PC-3 (cell line): ENCODE measurements at regions of chr6 and their contacts with region 1.

Region 1: DNA sequence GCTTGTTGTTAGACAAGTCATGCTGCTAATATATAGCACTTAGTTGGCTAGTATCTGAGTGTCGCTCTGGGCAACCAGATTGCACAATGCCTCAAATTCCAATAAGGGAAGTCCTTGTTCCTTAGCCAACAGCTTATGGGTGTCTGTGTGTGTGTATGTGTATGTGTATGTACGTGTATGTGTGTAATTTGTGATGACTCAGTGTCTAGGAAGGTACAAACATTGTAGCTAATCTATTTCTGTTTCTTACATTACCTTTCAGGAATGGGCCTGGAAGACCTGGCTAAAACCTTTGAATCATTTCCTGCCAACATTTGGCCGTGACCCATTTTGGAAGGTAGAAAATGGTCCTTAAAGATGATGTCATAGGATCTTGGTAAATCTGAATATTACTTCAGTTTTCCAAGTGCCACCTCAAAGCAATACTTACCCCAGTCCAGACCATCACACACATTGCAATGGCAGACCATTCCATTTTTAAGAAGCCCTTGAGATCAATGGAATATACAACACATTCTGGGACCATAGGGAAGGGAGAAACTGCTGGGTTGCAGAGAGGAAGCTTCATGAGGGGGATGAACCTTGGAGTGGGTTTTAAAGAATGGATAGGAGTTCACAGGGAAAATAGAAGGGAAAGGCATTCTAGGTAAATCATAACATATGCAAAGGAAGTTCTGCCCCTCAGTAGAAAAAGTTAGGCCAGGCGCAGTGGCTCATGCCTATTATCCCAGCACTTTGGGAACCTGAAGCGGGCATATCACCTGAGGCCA is 25.1 kb downstream of the NEDD9 start:
- DNase-seq: peak; percentile 98
- ATAC-seq: peak; percentile 85
- H3K4me3 ChIP-seq: peak overlapping the region; percentile 56; the same call in 1 of the 2 replicates
- H3K27ac ChIP-seq: peak overlapping the region; percentile 97
- H3K4me1 ChIP-seq: peaks cover 46% of the 10 kb centered on the region
- H3K27me3 ChIP-seq: no peaks in the 10 kb centered on the region
- CTCF ChIP-seq: no peak

Region 2: DNA sequence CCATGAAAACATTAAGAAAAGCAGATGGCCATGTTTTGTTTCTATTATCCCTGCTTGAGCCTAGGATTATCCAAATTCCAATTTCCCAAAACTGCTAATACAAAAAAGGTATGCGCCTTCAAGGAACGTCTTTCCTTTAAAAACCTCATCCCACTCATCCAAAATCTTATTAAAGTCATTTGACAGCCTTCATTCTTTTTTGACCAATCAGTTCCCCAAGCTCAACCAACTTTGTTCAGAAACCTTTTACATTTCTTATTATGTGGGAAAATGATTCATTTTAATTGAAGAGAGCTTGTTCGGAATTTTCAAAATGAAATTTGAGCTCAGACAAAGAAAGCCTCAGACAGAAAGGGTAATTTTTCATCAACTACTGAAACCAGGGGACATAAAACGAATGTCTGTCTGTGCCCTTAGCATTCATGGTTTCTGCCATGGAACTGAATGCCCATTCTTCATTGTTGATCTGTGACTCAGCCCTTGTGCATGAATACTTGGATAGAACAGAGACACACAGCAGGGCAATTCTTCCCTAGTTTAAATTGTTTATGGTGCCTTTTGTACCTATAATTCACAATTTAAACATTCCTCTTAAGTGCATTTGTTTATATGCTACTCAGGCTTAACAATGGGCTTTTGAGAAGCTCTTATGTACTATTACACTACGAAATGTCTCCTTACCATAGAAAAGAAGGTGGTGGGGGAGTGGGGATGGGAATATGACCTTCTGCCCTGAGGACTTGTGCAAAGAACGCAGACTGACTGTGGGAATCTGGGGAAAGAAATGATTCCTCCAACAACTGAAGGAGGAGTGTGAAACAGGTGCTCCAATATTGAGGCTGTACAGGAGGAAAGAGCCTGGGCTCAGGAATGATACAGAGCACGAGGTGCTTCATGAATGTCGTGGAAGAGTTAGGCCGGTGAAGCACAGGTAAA is 46.1 kb before region 1 on chr6:
- CTCF ChIA-PET with region 1: no interaction called
- POLR2A ChIA-PET with region 1: no interaction called
- intact Hi-C with region 1: loop called (anchors 2 kb)
- DNase-seq: peak; percentile 75
- ATAC-seq: peak; percentile 86
- H3K4me3 ChIP-seq: no peak overlapping the region
- H3K27ac ChIP-seq: peak overlapping the region; percentile 79
- H3K4me1 ChIP-seq: peaks cover 28% of the 10 kb centered on the region
- H3K27me3 ChIP-seq: no peaks in the 10 kb centered on the region
- CTCF ChIP-seq: no peak

Region 3: GRCh38 chr6:11218538-11219399 is 11.4 kb after region 1 on chr6:
- CTCF ChIA-PET with region 1: no interaction called
- POLR2A ChIA-PET with region 1: interaction called, 6 read pairs
- intact Hi-C with region 1: loop called (anchors 1 kb)
- DNase-seq: peak; percentile 82
- ATAC-seq: peak; percentile 90
- H3K4me3 ChIP-seq: 0 out of 2 replicates have a peak overlapping the region, but pooled peaks have one; percentile 18
- H3K27ac ChIP-seq: peak overlapping the region; percentile 94
- H3K4me1 ChIP-seq: peaks cover 35% of the 10 kb centered on the region
- H3K27me3 ChIP-seq: no peaks in the 10 kb centered on the region
- CTCF ChIP-seq: no peak

Region 4: DNA sequence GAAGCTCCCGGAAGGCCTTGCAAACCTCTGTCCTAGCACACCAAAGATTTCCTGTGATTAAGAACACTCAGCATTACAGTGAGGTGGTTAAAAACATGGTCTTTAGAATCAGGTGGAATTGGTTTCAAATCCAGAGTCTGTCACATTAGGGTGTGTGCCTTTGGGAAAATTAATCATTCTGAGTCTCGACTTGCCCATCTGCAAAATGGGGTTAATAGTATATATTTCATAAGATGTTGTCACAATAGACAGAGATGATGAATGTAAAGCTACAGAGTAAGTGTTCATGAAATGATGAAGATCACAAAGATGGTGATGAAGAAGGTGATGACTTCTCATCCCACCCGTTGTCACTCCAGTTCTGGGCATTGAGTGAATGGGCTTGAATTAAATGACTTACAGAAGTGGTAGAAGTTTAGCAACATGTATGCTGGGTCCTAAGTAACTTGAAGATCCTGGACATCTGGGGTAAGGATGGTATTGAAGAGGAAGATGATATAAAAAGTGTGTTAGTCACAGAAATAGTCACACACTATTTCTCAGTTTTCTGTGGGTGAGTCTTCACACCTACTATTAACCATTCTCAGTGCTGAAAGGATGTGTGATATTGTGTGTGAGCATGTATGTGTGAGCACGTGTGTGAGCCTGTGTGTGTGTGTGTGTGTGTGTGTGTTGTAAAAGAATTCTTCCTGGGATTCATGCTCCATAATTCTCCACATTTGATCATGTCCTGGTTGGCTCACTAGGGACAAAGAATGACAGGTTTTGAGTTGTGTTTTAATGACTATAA is 53.1 kb after region 1 on chr6:
- CTCF ChIA-PET with region 1: no interaction called
- POLR2A ChIA-PET with region 1: no interaction called
- intact Hi-C with region 1: no loop called
- DNase-seq: no peak
- ATAC-seq: no peak
- H3K4me3 ChIP-seq: no peak overlapping the region
- H3K27ac ChIP-seq: no peak overlapping the region
- H3K4me1 ChIP-seq: peaks cover 5% of the 10 kb centered on the region; the same call in 1 of the 2 replicates
- H3K27me3 ChIP-seq: no peaks in the 10 kb centered on the region
- CTCF ChIP-seq: no peak

Region 5: GRCh38 chr6:11288047-11288461 is 80.7 kb after region 1 on chr6:
- CTCF ChIA-PET with region 1: no interaction called
- POLR2A ChIA-PET with region 1: no interaction called
- intact Hi-C with region 1: no loop called
- DNase-seq: no peak
- ATAC-seq: no peak
- H3K4me3 ChIP-seq: no peak overlapping the region
- H3K27ac ChIP-seq: no peak overlapping the region
- H3K4me1 ChIP-seq: no peaks in the 10 kb centered on the region
- H3K27me3 ChIP-seq: no peaks in the 10 kb centered on the region
- CTCF ChIP-seq: no peak

Region 6: GRCh38 chr6:11317885-11318771 is 110.7 kb after region 1 on chr6:
- CTCF ChIA-PET with region 1: no interaction called
- POLR2A ChIA-PET with region 1: interaction called, 4 read pairs
- intact Hi-C with region 1: loop called (anchors 1 kb)
- DNase-seq: peak; percentile 98
- ATAC-seq: peak; percentile 61
- H3K4me3 ChIP-seq: no peak overlapping the region
- H3K27ac ChIP-seq: peak overlapping the region; percentile 89
- H3K4me1 ChIP-seq: peaks cover 62% of the 10 kb centered on the region
- H3K27me3 ChIP-seq: no peaks in the 10 kb centered on the region
- CTCF ChIP-seq: no peak